ENCODE measurements at regions of chr1 and their contacts with region 1.

Region 1: DNA sequence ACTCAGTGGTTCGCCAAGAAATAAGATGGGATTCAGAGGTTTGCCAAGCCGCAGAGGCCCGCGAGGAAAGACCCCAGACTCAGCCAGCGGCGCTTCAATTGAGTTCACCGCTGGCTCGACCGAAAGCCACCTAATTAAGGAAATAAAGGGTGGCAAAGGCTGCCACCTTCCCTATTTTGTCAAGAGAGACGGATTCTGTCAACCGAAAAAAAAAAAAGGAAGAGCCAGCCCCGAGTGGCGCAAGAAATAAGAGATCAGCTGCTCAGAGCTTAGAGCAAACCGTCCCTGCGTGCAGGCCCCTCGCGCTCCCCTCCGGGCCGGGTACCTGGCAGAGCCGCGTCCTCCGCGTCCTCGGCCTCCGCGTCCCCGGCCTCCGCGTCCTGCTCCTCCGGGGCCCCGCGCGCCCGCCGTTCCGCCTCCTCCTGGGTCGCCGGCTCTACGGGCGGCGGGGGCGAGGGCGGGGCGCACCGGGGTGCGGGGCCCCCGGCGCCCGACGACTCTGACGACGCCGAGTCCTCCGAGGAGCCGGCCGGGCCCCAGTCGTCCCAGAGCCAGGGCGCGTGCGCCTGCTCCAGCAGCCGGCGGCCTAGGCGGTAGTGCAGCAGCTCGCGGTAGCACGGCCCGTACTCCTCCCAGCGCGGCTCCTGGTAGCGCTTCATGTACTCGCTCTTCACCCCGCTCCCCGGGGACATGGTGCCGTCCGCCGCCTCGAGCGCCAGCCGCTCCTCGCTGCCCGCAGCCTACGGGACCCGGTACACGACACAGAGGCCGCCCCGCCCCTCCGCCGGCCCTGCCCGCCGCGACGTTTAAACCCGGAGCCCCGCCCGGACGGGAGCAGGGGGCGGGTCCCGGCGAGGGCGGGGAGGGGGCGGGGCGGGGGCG is 832 bp downstream of the CCSAP start:
- DNase-seq: peak; percentile 83
- H3K4me3 Mint-ChIP-seq: peak overlapping the region; percentile 81
- H3K27ac Mint-ChIP-seq: peak overlapping the region; percentile 70
- H3K4me1 Mint-ChIP-seq: peaks cover 54% of the 10 kb centered on the region
- H3K27me3 Mint-ChIP-seq: peaks cover 7% of the 10 kb centered on the region

Region 2: GRCh38 chr1:229325853-229326502 is 16.0 kb before region 1 on chr1:
- CTCF ChIA-PET with region 1: interaction called, 3 read pairs
- POLR2A ChIA-PET with region 1: interaction called, 3 read pairs
- intact Hi-C with region 1: loop called (anchors 2 kb)
- DNase-seq: no peak
- H3K4me3 Mint-ChIP-seq: peak overlapping the region; percentile 50
- H3K27ac Mint-ChIP-seq: peak overlapping the region; percentile 71
- H3K4me1 Mint-ChIP-seq: peaks cover 34% of the 10 kb centered on the region
- H3K27me3 Mint-ChIP-seq: no peaks in the 10 kb centered on the region

Region 3: DNA sequence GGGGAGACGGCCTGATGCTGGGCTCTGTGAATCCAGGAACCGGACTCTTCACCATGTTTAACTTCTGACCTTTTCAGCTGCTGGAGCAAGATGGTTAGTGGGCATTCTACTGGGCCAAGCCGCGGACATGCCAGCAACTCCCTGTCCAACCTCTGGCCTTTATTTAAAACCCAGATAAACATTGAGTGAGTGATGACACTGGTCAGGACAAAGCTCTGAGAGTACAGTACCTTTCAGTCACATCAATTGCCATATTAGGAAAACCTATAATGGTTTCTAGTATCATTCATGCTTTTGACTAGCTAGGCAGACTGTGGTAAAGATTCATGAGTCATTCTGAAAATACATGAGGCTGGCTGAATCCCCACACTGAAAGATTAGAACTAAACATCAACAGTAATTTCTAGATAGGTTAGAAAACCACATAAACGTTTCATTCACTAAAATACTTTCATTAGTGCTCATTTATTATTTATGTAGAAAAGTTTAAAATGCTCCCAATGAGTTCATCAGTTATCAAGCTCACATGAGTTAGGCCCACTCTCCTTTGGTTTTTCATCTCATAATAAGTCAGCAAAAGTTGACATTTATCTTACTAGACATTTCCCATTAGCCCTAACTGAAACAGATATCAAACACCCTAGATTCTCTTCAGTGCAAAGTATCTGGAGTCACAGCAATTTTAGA is 99.0 kb after region 1 on chr1:
- CTCF ChIA-PET with region 1: interaction called, 4 read pairs
- POLR2A ChIA-PET with region 1: interaction called, 3 read pairs
- intact Hi-C with region 1: loop called (anchors 1 kb)
- DNase-seq: no peak
- H3K4me3 Mint-ChIP-seq: no peak overlapping the region
- H3K27ac Mint-ChIP-seq: peak overlapping the region; percentile 56
- H3K4me1 Mint-ChIP-seq: peaks cover 22% of the 10 kb centered on the region
- H3K27me3 Mint-ChIP-seq: peaks cover 17% of the 10 kb centered on the region